K562 (cell line): ENCODE measurements at regions of chr2 and their contacts with region 1.

Region 1: GRCh38 chr2:24084386-24085361 is at the start of gene TP53I3:
- DNase-seq: peak; percentile 90 to 95 (median 92)
- ATAC-seq: peak; percentile 95
- H3K4me3 ChIP-seq: peak within 1 kb of the TSS; percentile 58
- H3K27ac ChIP-seq: peak within 1 kb of the TSS; percentile 75
- H3K4me1 ChIP-seq: peaks cover 12 to 18% of the 10 kb centered on the region in 2 experiments; a peak in 4 of 5 replicates
- H3K27me3 ChIP-seq: no peaks in the 10 kb centered on the region
- CTCF ChIP-seq: peak; percentile 85 to 95 (median 86)
- EP300 ChIP-seq: peak; percentile 16; the same call in 1 of the 2 replicates
- POLR2A ChIP-seq: peak; percentile 81
- RAD21 ChIP-seq: peak; percentile 80 to 83
- polyA plus RNA-seq, gene TP53I3: 0.65 to 1.3 TPM

Region 2: DNA sequence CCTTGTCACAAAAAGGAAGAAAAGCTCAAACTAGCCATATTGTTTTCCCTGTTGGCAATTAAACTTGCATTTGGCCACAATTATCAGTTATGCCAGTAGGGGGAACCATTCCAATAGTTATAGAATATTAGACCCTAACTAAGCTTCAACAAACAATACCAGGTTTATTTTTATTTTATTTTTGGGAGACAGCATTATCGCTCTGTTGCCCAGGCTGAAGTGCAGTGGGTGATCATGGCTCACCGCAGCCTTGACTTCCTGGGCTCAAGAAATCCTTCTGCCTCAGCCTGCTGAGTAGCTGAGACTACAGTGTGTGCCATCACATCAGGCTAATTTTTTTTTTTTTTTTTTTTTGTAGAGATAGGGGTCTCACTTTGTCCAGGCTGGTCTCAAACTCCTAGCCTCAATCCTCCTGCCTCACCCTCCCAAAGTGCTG is 259.9 kb before region 1 on chr2:
- CTCF ChIA-PET with region 1: no interaction called
- POLR2A ChIA-PET with region 1: no interaction called
- in situ Hi-C with region 1: no loop called
- intact Hi-C with region 1: loop called (anchors 2 kb)
- DNase-seq: peak; percentile 23 to 62 (median 34)
- ATAC-seq: peak; percentile 86
- H3K4me3 ChIP-seq: no peak overlapping the region
- H3K27ac ChIP-seq: no peak overlapping the region
- H3K4me1 ChIP-seq: no peaks in the 10 kb centered on the region
- H3K27me3 ChIP-seq: no peaks in the 10 kb centered on the region
- CTCF ChIP-seq: peak; percentile 54 to 80 (median 71); a peak in 5 of 6 replicates
- EP300 ChIP-seq: no peak
- POLR2A ChIP-seq: no peak
- RAD21 ChIP-seq: peak; percentile 46 to 66

Region 3: DNA sequence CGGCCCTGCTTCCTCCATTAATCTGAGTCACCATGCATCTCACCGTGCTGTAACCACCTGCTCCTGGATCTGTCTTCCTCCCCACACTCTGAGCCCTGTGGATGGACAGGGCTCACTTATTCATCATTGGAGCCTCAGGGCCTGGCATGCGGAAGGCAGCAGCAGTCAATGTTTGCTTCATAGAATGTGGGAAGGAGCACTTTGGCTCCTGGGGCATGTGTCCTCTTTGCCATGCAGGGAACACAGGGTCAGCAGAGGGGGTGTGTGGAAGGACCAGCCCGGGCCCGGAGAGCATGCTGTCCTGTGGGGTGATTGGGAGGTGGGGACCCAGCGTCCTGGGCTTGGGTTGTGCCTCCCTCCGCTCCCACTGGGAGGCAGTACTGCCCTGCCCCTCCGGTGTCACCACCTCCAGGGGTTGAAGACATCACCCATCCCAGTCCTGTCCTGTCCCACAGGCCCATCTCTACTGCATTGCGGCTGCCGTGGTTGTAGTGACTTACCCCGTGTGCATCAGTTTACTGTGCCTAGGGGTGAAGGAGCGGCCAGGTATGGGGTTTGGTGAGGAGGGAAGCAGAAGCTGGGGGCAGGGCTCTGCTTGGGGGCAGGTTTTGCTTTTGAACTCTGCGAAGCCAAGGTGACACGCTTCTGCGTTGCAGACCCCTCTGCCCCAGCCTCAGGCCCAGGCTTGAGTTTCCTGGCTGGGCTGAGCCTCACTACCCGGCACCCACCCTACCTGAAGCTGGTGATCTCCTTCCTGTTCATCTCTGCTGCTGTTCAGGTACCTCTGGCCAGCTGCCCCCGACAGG is 63.3 kb before region 1 on chr2:
- CTCF ChIA-PET with region 1: no interaction called
- POLR2A ChIA-PET with region 1: no interaction called
- in situ Hi-C with region 1: no loop called
- intact Hi-C with region 1: loop called (anchors 1 kb)
- DNase-seq: peak; percentile 55 to 74 (median 73)
- ATAC-seq: peak; percentile 93
- H3K4me3 ChIP-seq: no peak overlapping the region
- H3K27ac ChIP-seq: no peak overlapping the region
- H3K4me1 ChIP-seq: peaks cover under 1 to 35% of the 10 kb centered on the region in 2 experiments; a peak in 4 of 5 replicates
- H3K27me3 ChIP-seq: no peaks in the 10 kb centered on the region
- CTCF ChIP-seq: peak; percentile 72 to 85 (median 78)
- EP300 ChIP-seq: no peak
- POLR2A ChIP-seq: no peak
- RAD21 ChIP-seq: peak; percentile 47 to 82

Region 4: GRCh38 chr2:24123195-24123921 is 38.7 kb after region 1 on chr2 and contains the starts of genes FAM228B and PFN4:
- CTCF ChIA-PET with region 1: no interaction called
- POLR2A ChIA-PET with region 1: interaction called, 3 read pairs
- in situ Hi-C with region 1: no loop called
- intact Hi-C with region 1: loop called (anchors 2 kb)
- DNase-seq: peak; percentile 89 to 95 (median 90)
- ATAC-seq: peak; percentile 98
- H3K4me3 ChIP-seq: peak within 1 kb of the TSS; percentile 67
- H3K27ac ChIP-seq: peak within 1 kb of the TSS; percentile 78
- H3K4me1 ChIP-seq: peaks cover 3 to 11% of the 10 kb centered on the region in 2 experiments; a peak in 3 of 5 replicates
- H3K27me3 ChIP-seq: no peaks in the 10 kb centered on the region
- CTCF ChIP-seq: no peak
- EP300 ChIP-seq: no peak
- POLR2A ChIP-seq: peak; percentile 86
- RAD21 ChIP-seq: no peak; a peak in 1 of 4 replicates
- polyA plus RNA-seq, gene FAM228B: 1.1 to 1.3 TPM
- polyA plus RNA-seq, gene PFN4: 0.07 to 0.15 TPM

Region 5: DNA sequence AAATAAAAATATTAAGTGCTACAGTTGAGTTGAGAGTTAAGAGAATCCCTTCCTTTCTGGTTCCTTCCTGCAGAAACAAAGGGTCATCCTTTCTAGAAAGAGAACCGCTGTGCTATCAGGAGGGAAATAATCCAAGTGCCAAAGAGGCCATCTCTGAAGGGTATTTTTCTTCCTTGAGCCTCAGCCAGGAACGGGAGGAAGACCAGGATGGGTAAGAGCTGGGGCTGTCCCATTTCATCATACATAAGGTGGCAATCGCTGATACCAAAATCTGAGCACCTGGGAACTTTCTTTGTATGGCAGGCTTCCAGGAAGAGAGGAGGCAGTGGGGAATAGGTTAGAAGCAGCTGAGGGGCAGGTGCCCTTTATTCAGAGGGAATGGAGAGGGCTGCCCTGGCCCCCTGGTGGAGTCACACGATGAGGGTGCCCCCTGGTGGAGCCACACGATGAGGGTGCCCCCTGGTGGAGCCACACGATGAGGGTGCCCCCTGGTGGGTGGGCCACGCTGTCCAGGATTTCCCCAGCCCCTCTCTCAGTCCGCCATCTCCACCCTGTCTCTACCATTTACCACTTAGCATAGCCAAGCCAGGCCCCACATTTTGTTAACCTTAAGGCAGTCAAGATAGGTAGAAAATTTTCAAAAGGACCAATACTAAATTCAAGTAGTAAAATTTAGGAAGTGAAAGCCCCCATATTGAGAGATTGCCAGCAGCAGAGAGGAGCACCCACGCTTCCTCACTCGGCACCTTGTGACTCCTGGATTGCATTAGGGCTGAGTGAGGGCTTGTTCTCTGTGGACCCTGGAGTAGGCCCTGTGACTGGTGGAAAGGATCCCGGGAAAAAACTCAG is 79.7 kb after region 1 on chr2:
- CTCF ChIA-PET with region 1: interaction called, 10 read pairs
- POLR2A ChIA-PET with region 1: interaction called, 3 read pairs
- in situ Hi-C with region 1: no loop called
- intact Hi-C with region 1: loop called (anchors 1 kb)
- DNase-seq: peak; percentile 58 to 78 (median 69)
- ATAC-seq: peak; percentile 97
- H3K4me3 ChIP-seq: no peak overlapping the region
- H3K27ac ChIP-seq: no peak overlapping the region
- H3K4me1 ChIP-seq: peaks cover 0 to 4% of the 10 kb centered on the region in 2 experiments; a peak in 1 of 5 replicates
- H3K27me3 ChIP-seq: peaks cover 2 to 16% of the 10 kb centered on the region in 2 experiments; a peak in 1 of 5 replicates
- CTCF ChIP-seq: peak; percentile 98 to 99 (median 99)
- EP300 ChIP-seq: no peak; the same call in 1 of the 2 replicates
- POLR2A ChIP-seq: no peak
- RAD21 ChIP-seq: peak; percentile 72 to 91

Region 6: DNA sequence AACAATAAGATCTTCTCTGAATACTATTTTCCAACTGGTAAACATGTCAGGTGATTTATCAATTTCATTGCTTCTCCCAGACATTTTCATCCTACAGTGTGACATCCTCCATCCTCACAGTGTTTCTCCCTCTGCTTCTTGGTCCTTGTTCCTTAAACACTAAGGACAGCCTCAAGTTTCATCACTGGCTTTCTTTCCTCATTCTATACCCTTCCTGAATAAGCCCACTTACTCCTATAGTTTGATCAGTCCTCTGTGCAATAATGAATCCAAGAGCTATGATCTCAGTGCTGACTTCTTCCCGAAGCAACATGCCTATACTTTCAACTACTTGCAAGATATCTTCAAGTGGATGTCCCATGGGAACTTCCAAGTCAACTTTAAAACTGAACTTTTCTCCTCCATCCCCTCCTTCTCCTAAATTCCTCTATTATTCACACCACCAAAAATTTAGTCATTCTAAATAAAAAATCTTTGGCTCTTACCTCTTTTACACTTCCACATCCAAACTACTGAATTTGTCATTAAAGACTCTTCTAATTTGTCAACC is 177.8 kb after region 1 on chr2:
- CTCF ChIA-PET with region 1: no interaction called
- POLR2A ChIA-PET with region 1: no interaction called
- in situ Hi-C with region 1: no loop called
- intact Hi-C with region 1: no loop called
- DNase-seq: no peak
- ATAC-seq: no peak
- H3K4me3 ChIP-seq: no peak overlapping the region
- H3K27ac ChIP-seq: no peak overlapping the region
- H3K4me1 ChIP-seq: no peaks in the 10 kb centered on the region; a peak in 1 of 5 replicates
- H3K27me3 ChIP-seq: no peaks in the 10 kb centered on the region
- CTCF ChIP-seq: no peak
- EP300 ChIP-seq: no peak
- POLR2A ChIP-seq: no peak
- RAD21 ChIP-seq: no peak